ENCODE measurements at regions of chr10 and their contacts with region 1.

Region 1: DNA sequence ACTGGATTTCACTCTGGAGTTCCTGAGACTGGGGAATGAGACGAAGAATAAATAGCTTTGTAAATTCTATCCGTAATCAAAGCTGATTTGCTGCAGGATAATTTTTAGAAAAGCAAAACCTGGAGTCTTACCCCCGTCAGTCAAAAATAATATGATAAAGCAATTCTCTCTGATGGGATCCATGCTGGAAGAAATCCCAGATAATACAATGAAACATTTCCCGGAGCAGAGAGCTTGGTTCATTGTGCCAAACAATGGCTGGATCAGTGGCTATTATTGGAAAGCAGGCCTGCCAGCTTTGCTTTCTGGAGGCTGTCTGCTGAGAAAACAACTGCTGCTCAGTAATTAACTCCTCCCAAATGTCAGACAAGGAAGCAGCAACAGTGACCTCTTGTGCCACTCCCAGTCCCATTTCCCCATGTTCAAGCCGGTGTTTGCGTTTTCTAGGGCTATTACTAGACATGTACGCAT is 609.4 kb upstream of the PCDH15 start:
- DNase-seq: peak; percentile 18 to 80
- ATAC-seq: peak; percentile 95 to 100 (median 99)
- H3K4me3 ChIP-seq: peak overlapping the region in 5 of 10 donors; percentile 4 to 26 (median 19)
- H3K27ac ChIP-seq: peak overlapping the region in 9 of 10 donors; percentile 6 to 75 (median 66)
- H3K4me1 ChIP-seq: peaks cover 0 to 18% (median 14%) of the 10 kb centered on the region in 9 donors
- H3K27me3 ChIP-seq: no peaks in the 10 kb centered on the region
- CTCF ChIP-seq: peak in 7 of 9 donors; percentile 39 to 68 (median 47)

Region 2: DNA sequence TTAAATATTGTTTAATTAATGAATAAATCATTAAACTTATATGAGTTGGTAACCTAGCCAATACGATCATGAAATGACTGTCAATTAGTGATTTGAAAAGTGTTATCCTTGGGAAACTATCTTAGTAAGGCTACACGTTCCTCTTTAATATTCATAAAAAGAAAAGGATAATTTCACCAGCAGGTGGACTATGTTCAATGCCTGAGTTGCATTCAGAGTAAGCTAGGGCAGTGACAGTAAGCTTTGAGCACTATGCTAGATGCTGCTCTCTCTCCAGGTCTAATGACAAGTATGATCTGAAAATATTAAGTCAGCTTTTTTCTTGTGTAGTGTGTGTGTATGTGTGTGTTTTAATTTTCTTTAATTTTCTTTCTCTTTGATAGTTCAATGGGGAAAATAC is 123.1 kb before region 1 on chr10:
- intact Hi-C with region 1: loop called in 3 of 10 experiments (anchors 5 to 10 kb)
- DNase-seq: no peak
- ATAC-seq: peak in 1 of 8 donors; percentile 47
- H3K4me3 ChIP-seq: no peak overlapping the region
- H3K27ac ChIP-seq: no peak overlapping the region
- H3K4me1 ChIP-seq: no peaks in the 10 kb centered on the region
- H3K27me3 ChIP-seq: no peaks in the 10 kb centered on the region
- CTCF ChIP-seq: peak in 6 of 9 donors; percentile 8 to 44 (median 29)

Region 3: DNA sequence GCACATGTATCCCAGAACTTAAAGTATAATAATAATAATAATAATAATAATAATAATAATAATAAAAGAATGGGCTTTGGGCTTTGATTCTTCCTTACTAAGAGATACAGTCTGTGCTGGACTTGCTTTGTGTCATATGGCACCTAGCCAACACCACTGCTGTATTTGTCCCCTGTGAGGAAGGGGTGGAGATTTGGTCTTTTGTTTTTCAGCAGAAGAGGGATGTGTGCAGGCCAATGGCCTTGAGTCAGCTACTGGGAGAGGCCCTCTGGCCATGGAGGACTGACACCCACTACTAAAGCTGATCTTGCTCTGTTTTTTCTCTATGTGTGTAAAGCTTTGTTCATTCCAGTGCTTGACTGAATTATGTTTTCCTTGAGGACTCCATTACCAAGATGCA is 36.4 kb before region 1 on chr10:
- intact Hi-C with region 1: loop called in 1 of 10 experiments (anchors 2 kb)
- DNase-seq: peak in 1 of 2 donors; percentile 75
- ATAC-seq: peak; percentile 73 to 97 (median 94)
- H3K4me3 ChIP-seq: no peak overlapping the region
- H3K27ac ChIP-seq: peak overlapping the region in 5 of 10 donors; percentile 4 to 54 (median 30)
- H3K4me1 ChIP-seq: peaks cover 0 to 15% (median 5%) of the 10 kb centered on the region in 9 donors
- H3K27me3 ChIP-seq: no peaks in the 10 kb centered on the region
- CTCF ChIP-seq: no peak

Region 4: GRCh38 chr10:55500932-55501559 is 90.6 kb after region 1 on chr10:
- intact Hi-C with region 1: loop called in 1 of 10 experiments (anchors 5 kb)
- DNase-seq: peak in 1 of 2 donors; percentile 17
- ATAC-seq: no peak
- H3K4me3 ChIP-seq: no peak overlapping the region
- H3K27ac ChIP-seq: no peak overlapping the region
- H3K4me1 ChIP-seq: no peaks in the 10 kb centered on the region
- H3K27me3 ChIP-seq: no peaks in the 10 kb centered on the region
- CTCF ChIP-seq: peak; percentile 19 to 80 (median 64)